ENCODE measurements at regions of chr11 and their contacts with region 1.

Region 1: GRCh38 chr11:56066980-56067379 is 26.1 kb upstream of the OR8I2 start:
- DNase-seq: peak; percentile 50 to 65
- H3K4me3 ChIP-seq: no peak overlapping the region
- H3K4me3 Mint-ChIP-seq: no peak overlapping the region
- H3K27ac Mint-ChIP-seq: peak overlapping the region; percentile 83
- H3K4me1 ChIP-seq: peaks cover 40% of the 10 kb centered on the region
- H3K4me1 Mint-ChIP-seq: no peaks in the 10 kb centered on the region
- H3K27me3 ChIP-seq: no peaks in the 10 kb centered on the region
- H3K27me3 Mint-ChIP-seq: no peaks in the 10 kb centered on the region
- CTCF ChIP-seq: no peak

Region 2: GRCh38 chr11:55956521-55956920 is 110.5 kb before region 1 on chr11:
- CTCF ChIA-PET with region 1: interaction called, 3 read pairs
- POLR2A ChIA-PET with region 1: no interaction called
- intact Hi-C with region 1: loop called (anchors 1 kb)
- DNase-seq: peak; percentile 72 to 74
- H3K4me3 ChIP-seq: no peak overlapping the region
- H3K4me3 Mint-ChIP-seq: no peak overlapping the region
- H3K27ac Mint-ChIP-seq: peak overlapping the region; percentile 34
- H3K4me1 ChIP-seq: peaks cover 11% of the 10 kb centered on the region; the same call in 1 of the 2 replicates
- H3K4me1 Mint-ChIP-seq: no peaks in the 10 kb centered on the region
- H3K27me3 ChIP-seq: no peaks in the 10 kb centered on the region
- H3K27me3 Mint-ChIP-seq: no peaks in the 10 kb centered on the region
- CTCF ChIP-seq: no peak

Region 3: GRCh38 chr11:56152333-56152732 is 85.4 kb after region 1 on chr11:
- CTCF ChIA-PET with region 1: no interaction called
- POLR2A ChIA-PET with region 1: no interaction called
- intact Hi-C with region 1: loop called (anchors 5 kb)
- DNase-seq: no peak
- H3K4me3 ChIP-seq: no peak overlapping the region
- H3K4me3 Mint-ChIP-seq: no peak overlapping the region
- H3K27ac Mint-ChIP-seq: no peak overlapping the region
- H3K4me1 ChIP-seq: peaks cover 13% of the 10 kb centered on the region
- H3K4me1 Mint-ChIP-seq: peaks cover 12% of the 10 kb centered on the region
- H3K27me3 ChIP-seq: no peaks in the 10 kb centered on the region
- H3K27me3 Mint-ChIP-seq: no peaks in the 10 kb centered on the region
- CTCF ChIP-seq: no peak

Measured in Caco-2 (cell line).